Activated B cell treated with CpG ODN at 0.5 μM for 24 hours (primary cell): ENCODE measurements at regions of chr12 and their contacts with region 1.

Region 1: DNA sequence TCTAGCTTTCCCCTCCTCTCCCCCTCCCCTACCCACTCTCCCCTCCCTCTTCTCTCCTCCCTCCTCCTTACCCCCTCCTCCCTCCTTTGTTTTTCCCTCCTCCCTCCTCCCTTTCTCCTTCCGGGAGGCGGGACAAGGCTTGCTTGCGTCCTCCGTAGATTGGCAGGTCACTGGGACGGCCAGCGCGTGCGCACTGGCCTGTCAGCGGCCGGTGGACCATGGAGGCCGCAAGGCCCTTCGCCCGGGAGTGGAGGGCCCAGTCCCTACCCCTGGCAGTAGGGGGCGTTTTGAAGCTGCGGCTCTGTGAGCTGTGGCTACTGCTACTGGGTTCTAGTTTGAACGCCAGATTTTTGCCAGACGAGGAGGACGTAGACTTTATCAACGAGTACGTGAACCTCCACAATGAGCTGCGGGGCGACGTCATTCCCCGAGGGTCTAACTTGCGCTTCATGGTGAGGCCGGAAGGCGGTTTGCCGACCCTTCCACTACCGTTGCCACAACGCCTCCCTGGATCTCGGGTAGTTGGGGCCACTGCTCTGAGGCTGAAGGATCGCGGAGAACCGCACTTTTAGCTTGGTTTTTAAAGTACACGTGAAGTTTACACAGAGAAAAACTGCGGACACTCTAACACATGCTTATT is at the start of gene GLIPR1L2:
- DNase-seq: peak; percentile 86
- ATAC-seq: peak; percentile 95
- H3K4me3 Mint-ChIP-seq: peak within 1 kb of the TSS; percentile 94
- H3K27ac Mint-ChIP-seq: peak within 1 kb of the TSS; percentile 97
- H3K4me1 Mint-ChIP-seq: peaks cover 38% of the 10 kb centered on the region
- H3K27me3 Mint-ChIP-seq: no peaks in the 10 kb centered on the region
- CTCF ChIP-seq: peak; percentile 68
- total RNA-seq, gene GLIPR1L2: 0.20 TPM in 1 of 2 replicates, not detected in the other

Region 2: GRCh38 chr12:75239987-75240386 is 151.0 kb before region 1 on chr12:
- CTCF ChIA-PET with region 1: no interaction called
- POLR2A ChIA-PET with region 1: no interaction called
- intact Hi-C with region 1: no loop called
- DNase-seq: no peak
- ATAC-seq: no peak
- H3K4me3 Mint-ChIP-seq: no peak overlapping the region
- H3K27ac Mint-ChIP-seq: no peak overlapping the region
- H3K4me1 Mint-ChIP-seq: no peaks in the 10 kb centered on the region
- H3K27me3 Mint-ChIP-seq: no peaks in the 10 kb centered on the region
- CTCF ChIP-seq: no peak

Region 3: DNA sequence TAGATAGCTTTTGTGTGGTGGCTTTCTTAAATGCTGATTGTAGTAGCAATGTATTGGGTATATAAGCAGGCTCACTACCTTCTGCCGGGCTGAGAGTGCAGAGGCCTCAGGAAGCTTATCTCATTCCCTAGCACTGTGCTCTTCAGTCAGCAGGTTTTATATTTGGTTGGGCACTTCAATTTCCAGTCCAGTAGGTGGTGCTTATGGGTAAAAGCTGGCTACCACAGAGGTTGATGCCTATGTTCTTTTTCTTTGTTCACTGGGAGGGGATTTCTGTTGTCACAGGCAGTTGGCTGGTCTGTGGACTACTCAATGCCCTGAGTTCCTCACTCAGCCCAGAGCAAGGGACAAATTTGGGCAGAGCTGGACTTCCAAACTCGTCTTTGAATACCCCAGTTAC is 46.5 kb after region 1 on chr12:
- CTCF ChIA-PET with region 1: interaction called, 10 read pairs
- POLR2A ChIA-PET with region 1: no interaction called
- intact Hi-C with region 1: loop called (anchors 5 kb)
- DNase-seq: no peak
- ATAC-seq: peak; percentile 72
- H3K4me3 Mint-ChIP-seq: no peak overlapping the region
- H3K27ac Mint-ChIP-seq: no peak overlapping the region
- H3K4me1 Mint-ChIP-seq: peaks cover 3% of the 10 kb centered on the region
- H3K27me3 Mint-ChIP-seq: peaks cover 10% of the 10 kb centered on the region
- CTCF ChIP-seq: no peak

Region 4: DNA sequence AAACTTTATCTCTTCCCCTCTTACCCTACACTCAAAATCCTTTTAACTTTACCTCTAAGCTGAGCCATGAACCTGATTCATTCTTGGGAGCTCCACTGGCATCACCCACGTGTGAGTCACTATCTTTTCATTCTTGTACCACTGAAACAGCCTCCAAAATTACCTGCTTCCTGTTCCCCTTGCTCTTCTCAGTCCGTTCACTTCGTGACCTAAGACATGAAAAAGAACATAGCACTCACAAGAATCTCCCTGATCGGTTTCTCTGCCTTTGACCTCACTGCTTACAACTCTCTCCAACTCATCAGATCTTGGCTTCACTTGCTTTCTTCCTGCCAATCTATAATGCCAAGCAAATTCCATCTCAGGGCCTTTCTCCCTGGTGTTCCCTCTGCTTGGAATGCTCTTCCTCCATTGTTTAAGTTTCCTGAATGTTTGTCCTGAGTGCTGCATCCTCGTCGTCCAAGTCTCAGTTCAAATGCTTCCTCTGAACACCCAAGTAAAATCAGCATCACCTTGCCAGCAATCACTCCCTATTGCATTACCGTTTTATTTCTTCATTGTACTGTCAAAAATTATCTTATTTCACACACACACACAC is 98.7 kb after region 1 on chr12:
- CTCF ChIA-PET with region 1: interaction called, 32 read pairs
- POLR2A ChIA-PET with region 1: interaction called, 18 read pairs
- intact Hi-C with region 1: loop called (anchors 1 kb)
- DNase-seq: no peak
- ATAC-seq: peak; percentile 79
- H3K4me3 Mint-ChIP-seq: no peak overlapping the region
- H3K27ac Mint-ChIP-seq: peak overlapping the region; percentile 80
- H3K4me1 Mint-ChIP-seq: peaks cover 57% of the 10 kb centered on the region
- H3K27me3 Mint-ChIP-seq: no peaks in the 10 kb centered on the region
- CTCF ChIP-seq: no peak

Region 5: DNA sequence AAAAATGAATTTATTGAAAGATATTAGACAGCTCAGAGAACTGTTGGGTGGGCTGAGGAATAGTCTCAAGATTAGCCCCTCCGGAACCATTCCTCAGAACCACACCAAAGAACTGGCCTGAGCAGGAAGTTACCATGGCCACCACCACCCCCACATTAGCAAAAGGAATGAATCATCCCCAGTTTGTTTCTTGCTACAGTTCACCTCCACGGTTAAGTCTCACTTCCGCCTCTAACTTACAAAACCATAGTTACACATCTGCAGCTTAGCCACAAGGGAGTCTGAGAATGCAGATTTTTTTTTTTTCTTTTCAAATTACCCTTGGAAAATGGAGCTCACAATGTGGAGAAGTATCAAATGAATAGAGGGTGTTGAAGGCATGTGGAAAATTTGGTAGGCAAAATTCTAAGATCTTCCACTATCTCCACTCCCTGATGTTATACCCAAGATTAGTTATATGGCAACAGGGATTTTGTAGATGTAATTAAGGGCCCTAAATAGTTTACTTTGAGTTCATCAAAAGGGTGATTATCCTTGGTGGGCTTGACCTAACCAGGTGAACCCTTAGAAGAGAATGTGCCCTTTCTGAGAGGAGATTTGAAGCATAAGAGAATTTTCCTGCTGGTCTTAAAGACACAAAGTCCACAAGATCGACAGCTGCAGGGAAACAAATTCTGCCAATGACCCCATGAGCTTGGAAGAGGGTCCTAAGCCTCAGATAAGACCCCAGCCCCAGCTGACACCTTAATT is 250.2 kb after region 1 on chr12:
- CTCF ChIA-PET with region 1: no interaction called
- POLR2A ChIA-PET with region 1: no interaction called
- intact Hi-C with region 1: loop called (anchors 5 kb)
- DNase-seq: no peak
- ATAC-seq: peak; percentile 96
- H3K4me3 Mint-ChIP-seq: peak overlapping the region; percentile 26
- H3K27ac Mint-ChIP-seq: peak overlapping the region; percentile 51
- H3K4me1 Mint-ChIP-seq: peaks cover 33% of the 10 kb centered on the region
- H3K27me3 Mint-ChIP-seq: peaks cover under 1% of the 10 kb centered on the region
- CTCF ChIP-seq: no peak

Region 6: GRCh38 chr12:76559400-76560085 is 1168.5 kb after region 1 on chr12 and contains the start of gene OSBPL8:
- CTCF ChIA-PET with region 1: interaction called, 3 read pairs
- POLR2A ChIA-PET with region 1: interaction called, 4 read pairs
- intact Hi-C with region 1: loop called (anchors 2 kb)
- DNase-seq: peak; percentile 96
- ATAC-seq: peak; percentile 79
- H3K4me3 Mint-ChIP-seq: peak within 1 kb of the TSS; percentile 94
- H3K27ac Mint-ChIP-seq: peak within 1 kb of the TSS; percentile 95
- H3K4me1 Mint-ChIP-seq: peaks cover 45% of the 10 kb centered on the region
- H3K27me3 Mint-ChIP-seq: no peaks in the 10 kb centered on the region
- CTCF ChIP-seq: no peak
- total RNA-seq, gene OSBPL8: 73.8 and 79.6 TPM in 2 replicates